AG04449 (cell line): ENCODE measurements at regions of chr10 and their contacts with region 1.

Region 1: DNA sequence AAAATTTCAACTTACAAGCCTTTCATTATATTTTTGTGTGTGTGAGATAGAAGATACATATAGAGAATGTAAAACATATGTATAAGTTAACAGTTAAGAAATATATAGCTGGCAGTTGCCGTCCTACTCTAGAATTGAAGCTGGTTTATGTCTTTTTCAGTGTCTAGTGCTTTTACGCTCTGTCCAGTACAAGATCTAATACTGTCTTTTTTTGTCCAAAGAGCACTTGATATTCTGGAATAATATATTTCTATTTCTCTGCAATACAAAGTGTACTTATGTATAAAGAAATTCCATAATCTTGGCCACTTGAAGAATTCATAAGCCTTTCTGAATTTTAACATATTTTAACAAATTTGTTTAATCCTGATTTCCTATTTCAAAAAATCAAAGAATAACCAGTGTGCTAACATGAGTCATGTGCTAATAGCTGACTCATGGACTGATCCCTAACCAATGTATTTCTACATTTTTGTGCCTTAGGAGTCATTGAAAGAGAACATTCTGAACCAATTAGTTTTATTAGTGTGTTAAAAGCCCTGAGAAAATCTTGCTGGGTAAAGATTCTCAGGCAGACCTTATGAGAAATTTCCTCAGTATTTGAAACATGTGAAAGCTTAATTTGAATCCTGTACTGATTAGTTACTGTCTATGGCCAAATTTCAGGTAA is 73.2 kb upstream of the CCAR1 start:
- DNase-seq: peak; percentile 64
- H3K4me3 ChIP-seq: no peak overlapping the region
- CTCF ChIP-seq: no peak

Region 2: DNA sequence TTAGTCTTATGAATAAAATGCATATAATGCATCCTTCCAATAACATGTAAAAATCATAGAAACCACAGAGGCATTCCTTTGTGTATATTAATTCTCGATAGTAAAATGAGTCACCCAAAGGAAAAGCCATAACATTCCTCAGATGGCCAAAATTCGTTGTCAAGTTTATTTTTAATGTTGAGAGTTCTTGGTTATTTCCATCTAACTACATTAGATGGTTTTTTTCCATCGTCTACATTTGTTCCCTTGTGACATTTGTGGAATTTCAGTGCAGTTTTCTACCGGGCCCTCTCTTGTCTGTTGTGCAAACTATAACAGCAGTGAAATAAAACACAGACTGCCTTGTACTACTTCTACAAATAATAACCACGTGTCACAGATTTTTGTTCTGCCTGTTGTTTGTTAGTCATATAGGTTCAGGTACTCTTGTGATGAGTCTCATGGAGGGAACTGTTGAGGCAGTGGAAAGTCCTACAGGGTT is 18.5 kb after region 1 on chr10:
- CTCF ChIA-PET with region 1: interaction called, 10 read pairs
- POLR2A ChIA-PET with region 1: no interaction called
- DNase-seq: peak; percentile 83
- H3K4me3 ChIP-seq: no peak overlapping the region
- CTCF ChIP-seq: no peak